Activated CD8-positive, alpha-beta T cell treated with anti-CD3 and anti-CD28 coated beads, Interleukin-2, amount 10 ng/mL, durations not matched to agents 7 days and 5 days (primary cell): ENCODE measurements at regions of chr17 and their contacts with region 1.

Region 1: GRCh38 chr17:58364270-58364942 is 12.4 kb upstream of the SUPT4H1 start:
- DNase-seq: no peak
- ATAC-seq: no peak
- H3K4me3 Mint-ChIP-seq: no peak overlapping the region
- H3K27ac Mint-ChIP-seq: no peak overlapping the region
- H3K4me1 Mint-ChIP-seq: no peaks in the 10 kb centered on the region
- H3K27me3 Mint-ChIP-seq: no peaks in the 10 kb centered on the region

Region 2: GRCh38 chr17:58329035-58329809 is 35.2 kb before region 1 on chr17:
- CTCF ChIA-PET with region 1: no interaction called
- POLR2A ChIA-PET with region 1: interaction called, 12 read pairs
- DNase-seq: peak; percentile 90
- ATAC-seq: peak; percentile 18
- H3K4me3 Mint-ChIP-seq: peak overlapping the region; percentile 99
- H3K27ac Mint-ChIP-seq: peak overlapping the region; percentile 92
- H3K4me1 Mint-ChIP-seq: peaks cover 42% of the 10 kb centered on the region
- H3K27me3 Mint-ChIP-seq: peaks cover 12% of the 10 kb centered on the region

Region 3: GRCh38 chr17:58337600-58338453 is 26.6 kb before region 1 on chr17:
- CTCF ChIA-PET with region 1: no interaction called
- POLR2A ChIA-PET with region 1: interaction called, 10 read pairs
- DNase-seq: peak; percentile 96
- ATAC-seq: peak; percentile 67
- H3K4me3 Mint-ChIP-seq: peak overlapping the region; percentile 99
- H3K27ac Mint-ChIP-seq: peak overlapping the region; percentile 92
- H3K4me1 Mint-ChIP-seq: peaks cover 39% of the 10 kb centered on the region
- H3K27me3 Mint-ChIP-seq: no peaks in the 10 kb centered on the region